Calu3 (cell line): ENCODE measurements at regions of chr20 and their contacts with region 1.

Region 1: GRCh38 chr20:57622579-57623377 is 2.6 kb upstream of the ZBP1 start:
- DNase-seq: peak; percentile 96
- H3K4me3 Mint-ChIP-seq: peak overlapping the region; percentile 11
- H3K27ac Mint-ChIP-seq: peak overlapping the region; percentile 18
- H3K4me1 Mint-ChIP-seq: peaks cover 40% of the 10 kb centered on the region
- H3K27me3 Mint-ChIP-seq: no peaks in the 10 kb centered on the region
- CTCF ChIP-seq: peak; percentile 99

Region 2: DNA sequence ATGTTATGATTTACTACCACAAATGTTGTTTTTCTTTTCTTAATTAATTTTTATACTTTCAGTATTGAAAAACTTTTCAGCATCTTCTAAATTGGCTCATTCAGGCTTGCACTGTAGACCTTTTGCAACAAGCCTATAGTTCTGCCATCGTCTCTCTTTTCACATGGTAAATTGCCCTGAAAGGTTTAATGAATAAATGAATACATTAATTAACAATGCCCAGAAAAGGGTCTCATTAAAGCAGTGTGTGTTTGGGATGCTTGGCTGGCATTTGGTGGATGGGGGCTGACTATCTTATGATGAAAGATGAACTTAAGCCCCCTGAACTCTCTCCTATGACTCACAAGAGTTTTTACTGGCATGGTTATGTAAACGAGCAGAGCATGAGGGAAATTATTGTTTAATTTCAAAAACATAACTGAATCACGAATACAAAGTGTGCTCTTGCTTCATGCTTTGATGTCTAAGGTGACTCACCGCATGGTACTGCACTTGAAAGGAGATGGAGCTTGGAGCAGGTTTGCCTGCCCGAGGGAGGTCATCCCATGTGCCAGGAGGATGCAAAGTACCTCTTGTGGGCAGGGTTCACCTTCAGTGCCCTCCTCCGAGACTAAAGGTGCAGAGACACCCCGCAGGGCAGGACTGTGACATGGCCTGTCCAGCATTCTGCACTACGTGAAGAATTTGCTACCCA is 75.7 kb before region 1 on chr20:
- CTCF ChIA-PET with region 1: no interaction called
- intact Hi-C with region 1: no loop called
- DNase-seq: peak; percentile 61
- H3K4me3 Mint-ChIP-seq: no peak overlapping the region
- H3K27ac Mint-ChIP-seq: no peak overlapping the region
- H3K4me1 Mint-ChIP-seq: no peaks in the 10 kb centered on the region
- H3K27me3 Mint-ChIP-seq: peaks cover 94% of the 10 kb centered on the region
- CTCF ChIP-seq: no peak

Region 3: DNA sequence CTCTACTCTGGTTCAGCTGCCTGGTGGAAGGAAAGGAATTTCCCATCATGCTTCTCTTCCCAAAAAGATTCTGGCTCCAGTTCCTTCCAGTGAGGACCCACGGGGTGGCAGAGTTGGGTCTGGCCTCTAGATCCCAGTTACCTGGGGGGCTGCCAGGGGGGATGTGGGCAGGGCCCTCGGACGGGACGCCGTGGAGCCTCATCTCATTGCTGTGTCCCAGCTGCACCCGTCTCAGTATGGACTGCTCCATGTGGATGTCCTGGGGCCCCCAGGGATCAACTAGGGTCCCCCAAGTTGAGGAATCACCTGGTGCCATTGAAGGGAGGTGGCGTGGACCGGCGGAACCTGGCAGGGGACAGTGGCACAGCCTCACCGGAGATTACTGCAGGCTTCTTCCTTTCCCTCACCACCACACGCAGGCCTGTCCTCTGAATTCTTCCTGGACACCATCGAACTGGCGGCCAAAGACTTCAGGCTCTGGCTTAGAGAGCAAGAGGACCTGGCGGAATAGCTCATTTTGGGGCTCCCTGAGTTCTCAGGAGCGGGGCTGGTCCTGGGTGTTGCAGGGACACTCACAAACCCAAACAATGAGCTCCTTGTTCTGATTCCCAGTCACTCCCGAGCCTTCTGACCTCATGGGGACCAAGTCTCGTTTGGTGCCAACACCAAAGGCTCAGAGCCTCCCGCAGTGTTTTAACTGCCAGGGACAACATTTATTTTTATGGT is 11.0 kb before region 1 on chr20:
- CTCF ChIA-PET with region 1: interaction called, 16 read pairs
- intact Hi-C with region 1: no loop called
- DNase-seq: no peak
- H3K4me3 Mint-ChIP-seq: no peak overlapping the region
- H3K27ac Mint-ChIP-seq: no peak overlapping the region
- H3K4me1 Mint-ChIP-seq: peaks cover 2% of the 10 kb centered on the region
- H3K27me3 Mint-ChIP-seq: peaks cover 44% of the 10 kb centered on the region
- CTCF ChIP-seq: no peak

Region 4: GRCh38 chr20:57693002-57693640 is 70.3 kb after region 1 on chr20:
- CTCF ChIA-PET with region 1: interaction called, 10 read pairs
- intact Hi-C with region 1: no loop called
- DNase-seq: peak; percentile 94
- H3K4me3 Mint-ChIP-seq: peak overlapping the region; percentile 88
- H3K27ac Mint-ChIP-seq: peak overlapping the region; percentile 97
- H3K4me1 Mint-ChIP-seq: peaks cover 91% of the 10 kb centered on the region
- H3K27me3 Mint-ChIP-seq: no peaks in the 10 kb centered on the region
- CTCF ChIP-seq: peak; percentile 68

Region 5: DNA sequence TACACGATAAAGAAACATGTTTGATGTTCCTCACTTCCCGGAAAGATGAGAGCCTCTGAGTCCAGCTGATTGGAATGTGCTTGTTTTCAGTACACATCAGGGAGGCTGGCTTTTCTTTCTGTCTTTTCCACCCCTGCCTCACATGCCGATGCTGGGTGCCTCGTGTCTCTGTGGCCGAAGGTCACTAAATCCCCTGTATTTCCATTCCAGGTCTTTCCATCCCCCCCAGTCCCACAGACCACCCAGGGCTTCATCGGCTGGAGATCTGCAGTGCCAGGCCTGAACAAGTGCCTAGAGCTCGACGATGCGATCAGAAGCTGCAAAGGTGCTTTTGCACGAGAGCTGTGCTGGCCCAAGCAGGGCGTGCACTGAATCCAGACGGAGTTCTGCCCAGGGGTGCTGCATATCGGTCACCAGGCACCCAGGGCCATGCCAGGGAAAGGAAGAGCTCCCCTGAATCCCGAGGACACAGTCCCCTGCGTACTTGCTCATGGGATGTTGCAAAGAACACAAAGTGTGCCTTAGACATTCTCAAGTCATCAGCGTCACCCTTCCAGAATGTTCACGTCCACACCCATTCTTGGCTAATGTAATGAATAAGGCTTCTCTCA is 537.8 kb after region 1 on chr20:
- CTCF ChIA-PET with region 1: no interaction called
- intact Hi-C with region 1: no loop called
- DNase-seq: no peak
- H3K4me3 Mint-ChIP-seq: no peak overlapping the region
- H3K27ac Mint-ChIP-seq: no peak overlapping the region
- H3K4me1 Mint-ChIP-seq: no peaks in the 10 kb centered on the region
- H3K27me3 Mint-ChIP-seq: no peaks in the 10 kb centered on the region
- CTCF ChIP-seq: no peak

Region 6: GRCh38 chr20:58179432-58180099 is 556.8 kb after region 1 on chr20:
- CTCF ChIA-PET with region 1: interaction called, 11 read pairs
- intact Hi-C with region 1: no loop called
- DNase-seq: peak; percentile 92
- H3K4me3 Mint-ChIP-seq: peak overlapping the region; percentile 68
- H3K27ac Mint-ChIP-seq: peak overlapping the region; percentile 91
- H3K4me1 Mint-ChIP-seq: peaks cover 35% of the 10 kb centered on the region
- H3K27me3 Mint-ChIP-seq: no peaks in the 10 kb centered on the region
- CTCF ChIP-seq: peak; percentile 100

Region 7: DNA sequence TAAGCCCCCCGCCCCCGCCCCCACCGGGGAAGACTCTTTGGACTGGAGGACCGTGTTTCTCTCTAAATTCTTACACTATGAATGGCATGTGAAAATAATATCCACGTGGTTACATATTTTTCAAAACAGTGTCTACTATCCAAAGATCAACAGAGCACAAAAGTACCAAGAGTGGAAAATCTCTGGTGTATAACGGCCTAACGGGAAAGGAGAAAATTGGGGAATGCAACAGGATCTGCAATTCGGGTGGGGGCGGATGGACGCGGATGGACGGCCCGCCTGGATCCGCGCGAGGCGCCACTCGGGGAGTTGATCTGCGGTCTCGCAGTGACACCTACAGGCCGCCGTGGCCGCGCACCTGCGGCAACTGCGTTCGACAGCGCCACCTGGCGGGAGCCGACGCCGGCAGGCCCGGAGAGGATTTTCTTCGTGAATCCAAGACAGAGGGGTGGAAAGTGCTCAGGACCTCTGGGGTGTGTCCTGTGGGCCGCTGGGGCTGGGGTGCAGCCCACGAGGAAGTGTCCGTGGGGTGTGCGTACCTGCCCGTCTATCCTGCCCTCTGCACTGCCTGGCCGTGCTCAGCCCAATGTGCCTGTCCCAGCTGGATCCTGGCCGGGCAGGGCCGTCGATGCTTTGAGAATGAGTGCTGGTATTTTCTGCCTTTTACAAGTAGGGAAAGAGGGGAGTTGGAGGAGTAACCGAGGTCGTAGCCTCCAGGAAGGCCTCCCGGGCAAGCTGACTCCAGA is 587.0 kb after region 1 on chr20:
- CTCF ChIA-PET with region 1: interaction called, 21 read pairs
- intact Hi-C with region 1: loop called (anchors 2 kb)
- DNase-seq: peak; percentile 96
- H3K4me3 Mint-ChIP-seq: peak overlapping the region; percentile 51
- H3K27ac Mint-ChIP-seq: peak overlapping the region; percentile 52
- H3K4me1 Mint-ChIP-seq: peaks cover 17% of the 10 kb centered on the region
- H3K27me3 Mint-ChIP-seq: peaks cover 47% of the 10 kb centered on the region
- CTCF ChIP-seq: peak; percentile 100